ENCODE measurements at regions of chr6 and their contacts with region 1.

Region 1: DNA sequence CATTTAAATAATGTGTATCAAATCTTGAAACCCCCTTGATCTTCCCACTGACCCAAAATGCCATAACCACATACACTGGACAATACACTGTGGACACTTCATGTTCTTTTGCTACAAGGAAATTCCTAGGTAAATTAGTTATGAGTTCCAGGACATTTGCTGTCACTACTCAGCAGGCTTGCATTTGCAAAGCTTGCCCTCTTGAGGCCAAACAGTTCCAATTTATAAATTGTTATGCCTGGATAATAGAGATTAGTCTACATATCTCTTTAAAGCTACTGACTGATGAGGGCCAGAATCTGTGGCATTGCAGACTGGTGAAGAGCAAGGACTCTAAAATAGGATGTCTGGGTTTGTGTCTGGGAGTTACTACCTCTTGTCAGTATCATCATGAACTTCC is 17.4 kb upstream of the RAB32 start:
- DNase-seq: no peak
- H3K4me3 ChIP-seq: no peak overlapping the region
- H3K27ac ChIP-seq: no peak overlapping the region
- H3K4me1 ChIP-seq: no peaks in the 10 kb centered on the region
- H3K27me3 ChIP-seq: no peaks in the 10 kb centered on the region
- CTCF ChIP-seq: peak; percentile 21 to 56

Region 2: GRCh38 chr6:145929037-145929633 is 597.1 kb before region 1 on chr6:
- CTCF ChIA-PET with region 1: no interaction called
- dilution Hi-C with region 1: no loop called
- in situ Hi-C with region 1: no loop called
- intact Hi-C with region 1: loop called (anchors 10 kb)
- DNase-seq: peak; percentile 5
- H3K4me3 ChIP-seq: no peak overlapping the region
- H3K27ac ChIP-seq: no peak overlapping the region
- H3K4me1 ChIP-seq: no peaks in the 10 kb centered on the region
- H3K27me3 ChIP-seq: no peaks in the 10 kb centered on the region
- CTCF ChIP-seq: peak; percentile 60 to 68

Region 3: DNA sequence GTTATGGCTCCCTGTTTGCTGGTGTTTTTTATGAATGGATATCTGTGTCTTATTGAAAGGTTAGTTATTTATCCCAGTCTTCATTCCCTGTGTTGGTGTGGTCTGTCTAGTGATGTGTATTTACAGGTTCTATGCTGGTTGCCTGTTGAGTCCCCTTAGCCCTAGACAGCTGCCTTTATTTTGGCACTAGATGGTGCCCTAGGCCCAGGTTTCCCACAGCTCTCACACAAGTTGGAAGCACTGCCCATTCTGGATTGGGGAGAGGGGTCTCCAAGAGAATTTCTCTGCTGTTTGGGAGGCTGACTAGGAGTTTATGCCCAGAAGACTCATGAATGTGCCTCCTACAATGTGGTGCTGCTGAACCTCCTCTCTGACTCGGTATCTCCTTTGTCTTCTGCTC is 484.9 kb before region 1 on chr6:
- CTCF ChIA-PET with region 1: no interaction called
- dilution Hi-C with region 1: no loop called
- in situ Hi-C with region 1: no loop called
- intact Hi-C with region 1: loop called (anchors 1 kb)
- DNase-seq: peak; percentile 11
- H3K4me3 ChIP-seq: no peak overlapping the region
- H3K27ac ChIP-seq: no peak overlapping the region
- H3K4me1 ChIP-seq: no peaks in the 10 kb centered on the region
- H3K27me3 ChIP-seq: peaks cover 2% of the 10 kb centered on the region
- CTCF ChIP-seq: peak; percentile 51 to 76

Region 4: DNA sequence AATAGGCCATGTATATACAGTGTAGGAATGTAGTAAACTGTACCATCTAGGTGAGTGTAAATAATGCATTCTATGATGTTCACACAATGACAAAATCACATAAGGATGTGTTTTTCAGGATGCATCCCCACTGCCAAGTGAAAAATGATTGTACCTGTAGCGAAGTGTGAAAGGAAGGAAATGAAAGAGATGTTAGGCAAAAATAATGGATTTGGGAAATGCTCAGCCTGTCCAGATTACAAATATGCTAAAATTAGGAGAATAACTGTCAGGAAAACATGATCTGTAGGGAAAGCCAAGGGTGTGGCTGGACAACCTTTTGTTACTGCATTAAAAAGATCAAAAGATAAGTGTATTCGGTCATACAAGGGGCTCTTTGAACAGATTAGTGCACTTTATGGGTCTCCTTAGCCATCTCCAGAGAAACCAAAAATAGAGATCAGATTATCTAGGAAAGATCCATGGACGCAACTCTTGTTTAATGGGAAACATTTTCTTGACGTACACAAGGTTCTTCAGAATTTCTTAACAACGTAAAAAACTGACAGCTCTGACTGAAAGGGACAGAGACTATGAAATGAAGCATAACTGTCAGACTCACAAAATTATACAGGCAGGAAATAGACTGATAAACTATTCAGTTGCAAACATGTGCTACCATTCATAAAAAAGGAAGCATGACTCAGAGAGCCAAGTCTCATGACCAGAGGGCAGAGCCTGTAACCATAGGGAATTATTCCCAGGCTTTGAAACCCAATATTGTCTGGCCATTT is 236.2 kb before region 1 on chr6:
- CTCF ChIA-PET with region 1: no interaction called
- dilution Hi-C with region 1: no loop called
- in situ Hi-C with region 1: no loop called
- intact Hi-C with region 1: loop called (anchors 10 kb)
- DNase-seq: peak; percentile 50
- H3K4me3 ChIP-seq: no peak overlapping the region
- H3K27ac ChIP-seq: no peak overlapping the region
- H3K4me1 ChIP-seq: peaks cover 10% of the 10 kb centered on the region
- H3K27me3 ChIP-seq: no peaks in the 10 kb centered on the region
- CTCF ChIP-seq: no peak

Region 5: DNA sequence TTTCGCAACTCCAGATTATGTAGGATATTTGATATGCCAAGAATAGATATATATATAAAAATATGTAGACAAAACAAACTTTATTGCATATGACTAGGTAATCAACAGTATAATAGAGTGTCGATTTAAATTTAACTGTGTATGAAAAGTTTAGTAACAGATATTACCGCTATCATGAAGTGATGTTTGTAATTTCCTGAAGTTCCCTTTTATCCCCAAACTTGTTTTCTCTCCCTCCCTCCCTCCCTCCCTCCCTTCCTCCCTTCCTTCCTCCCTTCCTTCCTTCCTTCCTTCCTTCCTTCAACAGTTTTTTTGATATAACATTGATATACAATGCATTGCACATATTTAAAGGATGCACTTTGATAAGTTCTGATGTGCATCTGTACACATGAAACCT is 87.8 kb after region 1 on chr6:
- CTCF ChIA-PET with region 1: no interaction called
- dilution Hi-C with region 1: loop called (anchors 5 kb)
- in situ Hi-C with region 1: no loop called
- intact Hi-C with region 1: no loop called
- DNase-seq: no peak
- H3K4me3 ChIP-seq: no peak overlapping the region
- H3K27ac ChIP-seq: no peak overlapping the region
- H3K4me1 ChIP-seq: no peaks in the 10 kb centered on the region
- H3K27me3 ChIP-seq: peaks cover 2% of the 10 kb centered on the region
- CTCF ChIP-seq: no peak

Measured in mammary epithelial cell (primary cell).